ENCODE measurements at regions of chr15 and their contacts with region 1.

Region 1: DNA sequence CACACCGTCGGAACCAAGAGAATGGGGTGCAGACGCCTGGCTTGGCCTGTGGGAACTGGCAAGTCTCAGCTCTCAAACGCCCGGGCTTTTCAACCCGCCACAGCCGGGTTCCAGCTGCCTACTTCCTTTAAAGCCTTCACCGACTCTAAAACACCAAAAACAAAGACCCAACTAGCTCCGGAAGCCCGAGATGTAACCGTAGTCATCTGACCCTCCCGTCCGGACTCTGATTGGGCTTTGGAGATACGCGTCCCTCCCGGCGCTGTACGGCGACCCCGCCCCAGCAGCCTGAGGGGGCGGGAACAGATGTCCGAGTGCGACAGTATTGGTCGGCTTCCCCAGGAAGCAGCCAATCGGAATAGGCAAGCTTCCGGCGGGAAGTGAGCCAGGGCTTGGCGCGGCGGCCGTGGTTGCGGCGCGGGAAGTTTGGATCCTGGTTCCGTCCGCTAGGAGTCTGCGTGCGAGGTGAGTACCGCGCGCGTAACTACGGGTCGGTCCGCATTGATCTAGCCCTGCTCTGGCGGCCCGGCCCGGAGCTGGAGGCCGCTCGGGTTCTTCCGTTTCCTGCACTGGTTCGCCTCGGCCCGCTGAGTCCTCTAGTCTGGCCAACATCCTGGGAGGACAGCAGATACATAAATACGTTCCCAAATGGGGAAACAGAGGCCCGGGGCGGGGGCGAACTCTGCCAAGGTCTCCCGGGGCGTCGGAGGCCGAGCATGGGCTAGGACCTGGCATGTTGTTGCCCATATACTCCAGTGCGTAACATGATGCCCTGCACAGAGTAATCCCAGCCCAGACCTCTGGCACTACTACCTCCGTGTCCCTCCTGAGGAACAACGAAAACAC is at the start of gene BLM:
- DNase-seq: peak; percentile 96 to 97 (median 97)
- H3K4me3 ChIP-seq: peak within 1 kb of the TSS; percentile 81 to 95
- H3K4me3 Mint-ChIP-seq: peak within 1 kb of the TSS; percentile 95 to 99 (median 98)
- H3K27ac ChIP-seq: peak within 1 kb of the TSS; percentile 82
- H3K27ac Mint-ChIP-seq: peak within 1 kb of the TSS; percentile 93 to 97 (median 95)
- H3K4me1 ChIP-seq: peaks cover 19% of the 10 kb centered on the region
- H3K4me1 Mint-ChIP-seq: peaks cover 16 to 31% (median 25%) of the 10 kb centered on the region in 4 donors
- H3K27me3 ChIP-seq: no peaks in the 10 kb centered on the region
- H3K27me3 Mint-ChIP-seq: no peaks in the 10 kb centered on the region
- total RNA-seq, gene BLM: 6.5 to 8.9 TPM

Region 2: GRCh38 chr15:90648137-90649070 is 68.8 kb before region 1 on chr15:
- CTCF ChIA-PET with region 1: interaction called, 7 read pairs
- POLR2A ChIA-PET with region 1: interaction called, 4 read pairs
- intact Hi-C with region 1: loop called (anchors 1 kb)
- DNase-seq: peak; percentile 59 to 75 (median 67)
- H3K4me3 ChIP-seq: no peak overlapping the region
- H3K4me3 Mint-ChIP-seq: peak overlapping the region in 7 of 8 donors; percentile 53 to 80 (median 73)
- H3K27ac ChIP-seq: no peak overlapping the region
- H3K27ac Mint-ChIP-seq: peak overlapping the region; percentile 28 to 83 (median 75)
- H3K4me1 ChIP-seq: peaks cover 20% of the 10 kb centered on the region
- H3K4me1 Mint-ChIP-seq: peaks cover 14 to 27% (median 21%) of the 10 kb centered on the region in 4 donors
- H3K27me3 ChIP-seq: no peaks in the 10 kb centered on the region
- H3K27me3 Mint-ChIP-seq: peaks cover 0 to 3% of the 10 kb centered on the region in 2 donors

Region 3: GRCh38 chr15:90660195-90660998 is 56.8 kb before region 1 on chr15:
- CTCF ChIA-PET with region 1: interaction called, 3 read pairs
- POLR2A ChIA-PET with region 1: interaction called, 5 read pairs
- intact Hi-C with region 1: loop called (anchors 2 kb)
- DNase-seq: peak; percentile 28 to 75 (median 32)
- H3K4me3 ChIP-seq: peak overlapping the region in 1 of 2 donors; percentile 33
- H3K4me3 Mint-ChIP-seq: peak overlapping the region; percentile 47 to 90 (median 79)
- H3K27ac ChIP-seq: no peak overlapping the region
- H3K27ac Mint-ChIP-seq: peak overlapping the region in 4 of 7 donors; percentile 16 to 84 (median 41)
- H3K4me1 ChIP-seq: peaks cover 61% of the 10 kb centered on the region
- H3K4me1 Mint-ChIP-seq: peaks cover 52 to 75% (median 62%) of the 10 kb centered on the region in 4 donors
- H3K27me3 ChIP-seq: peaks cover 12% of the 10 kb centered on the region
- H3K27me3 Mint-ChIP-seq: peaks cover 26 to 37% of the 10 kb centered on the region in 2 donors

Region 4: DNA sequence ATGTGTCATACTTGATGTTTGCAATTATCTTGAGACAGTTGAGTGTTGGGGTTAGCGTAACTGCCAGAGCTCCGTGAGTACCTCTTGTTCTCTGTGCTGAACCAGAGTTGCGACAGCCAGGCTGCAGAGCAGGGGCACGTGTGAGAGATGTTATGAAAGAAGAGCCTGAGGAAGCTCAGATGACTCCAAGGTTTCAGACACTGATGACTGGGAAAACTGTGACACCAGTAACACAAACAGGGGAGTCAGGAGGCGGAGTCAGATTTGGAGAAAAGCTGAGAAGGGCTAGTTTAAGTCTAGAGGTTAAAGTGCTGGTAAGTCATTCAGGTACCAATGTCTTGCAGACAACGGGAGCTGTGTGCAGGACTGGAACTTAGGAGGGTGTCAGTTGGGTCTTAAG is 44.9 kb after region 1 on chr15:
- CTCF ChIA-PET with region 1: no interaction called
- POLR2A ChIA-PET with region 1: no interaction called
- intact Hi-C with region 1: no loop called
- DNase-seq: no peak
- H3K4me3 ChIP-seq: no peak overlapping the region
- H3K4me3 Mint-ChIP-seq: no peak overlapping the region
- H3K27ac ChIP-seq: no peak overlapping the region
- H3K27ac Mint-ChIP-seq: peak overlapping the region in 1 of 7 donors; percentile 34
- H3K4me1 ChIP-seq: no peaks in the 10 kb centered on the region
- H3K4me1 Mint-ChIP-seq: peaks cover 0 to 5% (median 0%) of the 10 kb centered on the region in 4 donors
- H3K27me3 ChIP-seq: no peaks in the 10 kb centered on the region
- H3K27me3 Mint-ChIP-seq: no peaks in the 10 kb centered on the region

Region 5: DNA sequence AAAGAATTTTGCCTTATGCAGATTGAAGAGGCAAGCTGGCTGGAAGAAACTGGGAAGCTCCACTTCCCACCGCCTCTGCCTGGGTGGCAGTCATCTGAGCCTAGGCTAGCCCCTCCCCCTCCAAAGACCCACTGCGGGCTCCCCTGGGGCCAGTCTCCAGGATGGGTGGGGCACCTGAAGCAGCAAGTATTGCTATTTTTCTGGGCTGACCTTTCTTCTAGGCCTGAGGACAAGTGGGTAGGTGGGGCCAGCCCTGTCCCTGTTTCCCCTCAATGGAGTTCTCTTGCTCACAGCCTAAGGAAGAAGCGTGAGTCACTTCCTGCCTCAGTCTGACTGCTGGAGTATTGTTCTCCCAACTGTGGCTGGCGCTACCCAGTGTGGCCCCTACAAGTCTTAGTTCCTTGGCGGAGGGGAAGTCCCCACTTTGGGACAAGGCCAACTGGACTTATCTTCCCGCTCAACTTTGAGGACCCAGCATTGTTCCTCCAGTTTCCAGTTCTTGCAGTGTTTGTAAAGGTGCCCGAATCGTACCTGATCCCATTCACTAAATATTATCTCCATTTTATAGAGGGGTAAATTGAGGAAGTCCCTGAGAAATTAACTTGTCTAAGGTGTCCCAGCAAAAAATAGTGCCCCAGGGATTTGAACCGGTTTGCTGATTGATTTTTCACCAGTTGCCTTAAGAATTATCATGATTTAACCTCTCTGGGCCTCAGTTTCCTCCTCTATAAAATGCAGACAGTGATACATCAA is 152.6 kb after region 1 on chr15:
- CTCF ChIA-PET with region 1: no interaction called
- POLR2A ChIA-PET with region 1: interaction called, 14 read pairs
- intact Hi-C with region 1: loop called (anchors 2 kb)
- DNase-seq: peak in 1 of 5 donors; percentile 69
- H3K4me3 ChIP-seq: peak overlapping the region in 1 of 2 donors; percentile 42
- H3K4me3 Mint-ChIP-seq: peak overlapping the region; percentile 84 to 96 (median 88)
- H3K27ac ChIP-seq: peak overlapping the region; percentile 68
- H3K27ac Mint-ChIP-seq: peak overlapping the region; percentile 92 to 98 (median 94)
- H3K4me1 ChIP-seq: peaks cover 46% of the 10 kb centered on the region
- H3K4me1 Mint-ChIP-seq: peaks cover 23 to 65% (median 40%) of the 10 kb centered on the region in 4 donors
- H3K27me3 ChIP-seq: no peaks in the 10 kb centered on the region
- H3K27me3 Mint-ChIP-seq: no peaks in the 10 kb centered on the region

Region 6: DNA sequence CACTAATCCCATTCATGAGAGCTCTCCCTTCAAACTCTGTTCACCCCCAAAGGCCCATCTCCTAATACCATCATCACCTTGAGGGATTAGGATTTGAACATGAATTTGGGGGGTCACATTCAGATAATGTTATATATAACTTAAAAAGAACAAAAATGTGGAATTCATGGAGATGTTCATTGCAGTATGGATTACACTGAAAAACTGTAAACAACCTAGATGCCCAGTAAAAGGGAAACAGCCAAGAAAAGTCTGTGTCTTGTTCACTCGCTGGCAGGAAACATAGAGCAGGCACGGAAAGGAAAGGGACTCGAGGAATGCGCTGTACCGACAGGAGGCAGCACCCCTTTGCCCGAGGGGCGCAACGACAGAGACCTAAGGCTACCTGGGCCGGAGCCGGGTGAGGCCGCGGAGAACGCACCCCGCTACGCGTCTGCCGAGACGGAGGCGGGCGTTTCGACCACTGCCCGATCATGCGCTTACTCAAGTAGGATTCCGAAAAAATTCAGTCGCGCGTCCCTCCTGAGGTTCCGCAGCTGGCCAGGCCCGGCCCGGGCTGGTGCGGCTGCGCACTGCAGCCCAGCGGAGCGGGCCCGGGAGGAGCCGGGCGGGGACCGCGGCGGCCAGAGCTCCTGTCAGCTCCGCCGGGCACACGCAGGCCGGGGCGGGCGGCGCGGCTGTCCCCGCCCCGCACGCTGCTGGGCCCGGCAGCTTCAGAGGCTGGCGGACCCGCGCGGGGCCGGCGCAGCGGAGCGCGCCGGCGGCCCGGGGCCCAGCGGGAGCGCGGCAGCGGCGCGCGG is 185.0 kb after region 1 on chr15:
- CTCF ChIA-PET with region 1: no interaction called
- POLR2A ChIA-PET with region 1: interaction called, 16 read pairs
- intact Hi-C with region 1: no loop called
- DNase-seq: peak; percentile 73 to 79 (median 75)
- H3K4me3 ChIP-seq: peak overlapping the region; percentile 61 to 80
- H3K4me3 Mint-ChIP-seq: peak overlapping the region; percentile 76 to 95 (median 92)
- H3K27ac ChIP-seq: peak overlapping the region; percentile 68
- H3K27ac Mint-ChIP-seq: peak overlapping the region; percentile 85 to 96 (median 94)
- H3K4me1 ChIP-seq: peaks cover 16% of the 10 kb centered on the region
- H3K4me1 Mint-ChIP-seq: peaks cover 10 to 38% (median 26%) of the 10 kb centered on the region in 4 donors
- H3K27me3 ChIP-seq: no peaks in the 10 kb centered on the region
- H3K27me3 Mint-ChIP-seq: no peaks in the 10 kb centered on the region

Measured in CD4-positive, alpha-beta memory T cell (primary cell).